IMR-90 (cell line): ENCODE measurements at regions of chr20 and their contacts with region 1.

Region 1: DNA sequence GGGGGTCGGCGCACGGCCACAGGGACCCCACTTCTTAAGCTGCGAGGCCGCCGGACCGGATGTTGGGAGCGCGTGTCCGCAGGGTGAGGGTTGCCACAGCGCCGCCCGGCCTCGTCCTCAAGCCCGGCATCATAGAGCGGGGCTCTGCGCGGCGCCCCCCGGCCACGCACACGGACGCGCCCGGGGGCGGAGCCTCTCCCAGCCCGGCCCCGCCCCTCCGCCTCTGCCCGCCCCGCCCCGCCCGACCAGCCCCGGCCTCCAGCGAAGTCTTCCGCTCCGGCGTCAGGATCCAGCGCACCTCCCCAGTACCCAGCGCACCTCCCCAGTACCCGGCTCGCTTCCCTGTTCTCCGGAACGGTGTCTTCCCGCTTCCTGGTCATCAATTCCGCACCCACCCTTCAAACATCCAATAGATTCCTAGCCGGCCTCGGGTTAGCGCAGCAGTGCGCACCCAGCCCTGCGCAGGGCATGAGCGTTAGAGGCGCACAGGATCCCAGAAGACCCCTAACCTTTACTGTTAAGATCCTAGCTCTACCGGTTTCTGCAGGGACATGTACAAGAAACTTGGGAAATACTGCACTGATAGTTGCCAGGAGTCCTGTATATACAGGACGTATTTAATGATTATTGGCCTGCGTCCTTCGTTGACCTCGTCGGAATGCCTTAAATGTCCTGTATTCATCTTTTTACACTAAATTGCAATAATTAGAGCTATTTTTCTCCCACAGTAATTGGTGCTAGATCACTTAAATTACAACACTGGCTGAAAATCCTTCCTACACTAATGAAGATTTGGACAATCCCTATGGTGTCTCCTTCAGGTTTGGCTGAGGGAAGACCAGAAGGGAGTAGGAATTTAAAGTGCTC is 535 bp upstream of the DNAAF9 start:
- DNase-seq: peak; percentile 59
- ATAC-seq: peak; percentile 80
- H3K4me3 ChIP-seq: peak overlapping the region; percentile 90
- H3K27ac ChIP-seq: peak overlapping the region; percentile 98
- H3K4me1 ChIP-seq: peaks cover 5% of the 10 kb centered on the region
- H3K27me3 ChIP-seq: no peaks in the 10 kb centered on the region
- CTCF ChIP-seq: no peak
- POLR2A ChIP-seq: peak; percentile 73
- RAD21 ChIP-seq: no peak

Region 2: DNA sequence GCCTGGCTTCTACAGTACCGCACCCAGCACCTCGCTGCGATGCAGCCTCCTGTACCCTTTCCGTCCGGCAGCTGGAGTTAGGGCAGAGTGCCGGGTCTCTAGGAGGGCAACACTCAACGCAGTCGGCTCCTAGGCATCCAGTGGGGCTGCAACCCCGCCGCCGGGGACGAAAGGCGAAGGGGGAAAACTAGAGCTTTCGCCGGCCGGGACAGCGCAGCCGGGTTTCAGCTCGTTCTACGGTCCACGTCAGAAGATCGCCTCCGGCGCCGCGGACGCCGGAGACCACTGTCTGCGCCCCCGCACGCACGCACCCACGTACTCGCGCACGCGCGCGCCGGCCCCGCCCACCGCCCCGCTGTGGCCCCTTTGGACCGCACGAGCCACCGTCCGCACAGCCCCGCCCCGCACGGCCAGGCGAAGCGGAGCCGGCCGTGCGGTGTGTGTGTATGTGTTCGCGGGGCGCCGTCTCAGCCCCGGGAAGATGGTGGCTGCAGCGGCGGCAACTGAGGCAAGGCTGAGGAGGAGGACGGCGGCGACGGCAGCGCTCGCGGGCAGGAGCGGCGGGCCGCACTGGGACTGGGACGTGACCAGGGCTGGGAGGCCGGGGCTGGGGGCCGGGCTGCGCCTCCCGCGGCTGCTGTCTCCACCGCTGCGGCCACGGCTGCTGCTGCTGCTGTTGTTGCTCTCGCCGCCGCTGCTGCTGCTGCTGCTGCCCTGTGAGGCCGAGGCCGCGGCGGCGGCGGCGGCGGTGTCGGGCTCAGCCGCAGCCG is 62.8 kb after region 1 on chr20 and contains the start of gene ATRN:
- CTCF ChIA-PET with region 1: no interaction called
- POLR2A ChIA-PET with region 1: interaction called, 3 read pairs
- dilution Hi-C with region 1: no loop called
- in situ Hi-C with region 1: no loop called
- intact Hi-C with region 1: loop called (anchors 1 kb)
- DNase-seq: peak; percentile 89
- ATAC-seq: peak; percentile 96
- H3K4me3 ChIP-seq: peak within 1 kb of the TSS; percentile 90
- H3K27ac ChIP-seq: peak within 1 kb of the TSS; percentile 98
- H3K4me1 ChIP-seq: peaks cover 5% of the 10 kb centered on the region
- H3K27me3 ChIP-seq: peaks cover 7% of the 10 kb centered on the region; the same call in 1 of the 2 replicates
- CTCF ChIP-seq: no peak
- POLR2A ChIP-seq: peak; percentile 89
- RAD21 ChIP-seq: 0 out of 2 replicates have a peak, but pooled peaks have one; percentile 4
- total RNA-seq, gene ATRN: 42.5 and 46.2 TPM in 2 replicates

Region 3: GRCh38 chr20:3563548-3564177 is 155.7 kb after region 1 on chr20:
- CTCF ChIA-PET with region 1: no interaction called
- POLR2A ChIA-PET with region 1: no interaction called
- dilution Hi-C with region 1: no loop called
- in situ Hi-C with region 1: no loop called
- intact Hi-C with region 1: loop called (anchors 2 kb)
- DNase-seq: peak; percentile 69
- ATAC-seq: peak; percentile 89
- H3K4me3 ChIP-seq: no peak overlapping the region
- H3K27ac ChIP-seq: no peak overlapping the region
- H3K4me1 ChIP-seq: no peaks in the 10 kb centered on the region
- H3K27me3 ChIP-seq: no peaks in the 10 kb centered on the region
- CTCF ChIP-seq: peak; percentile 80
- POLR2A ChIP-seq: no peak
- RAD21 ChIP-seq: peak; percentile 78

Region 4: GRCh38 chr20:3744806-3745685 is 337.0 kb after region 1 on chr20:
- CTCF ChIA-PET with region 1: no interaction called
- POLR2A ChIA-PET with region 1: no interaction called
- dilution Hi-C with region 1: no loop called
- in situ Hi-C with region 1: no loop called
- intact Hi-C with region 1: no loop called
- DNase-seq: no peak
- ATAC-seq: no peak
- H3K4me3 ChIP-seq: no peak overlapping the region
- H3K27ac ChIP-seq: no peak overlapping the region
- H3K4me1 ChIP-seq: no peaks in the 10 kb centered on the region
- H3K27me3 ChIP-seq: peaks cover 12% of the 10 kb centered on the region
- CTCF ChIP-seq: no peak
- POLR2A ChIP-seq: no peak
- RAD21 ChIP-seq: no peak